A549 (cell line): ENCODE measurements at regions of chr5 and their contacts with region 1.

Region 1: GRCh38 chr5:88690409-88691229 is 192.4 kb downstream of the MEF2C start:
- DNase-seq: peak; percentile 49 to 59
- ATAC-seq: peak; percentile 69 to 90
- H3K4me3 ChIP-seq: peak overlapping the region; percentile 27
- H3K27ac ChIP-seq: no peak overlapping the region
- H3K4me1 ChIP-seq: peaks cover 3% of the 10 kb centered on the region; the same call in 1 of the 3 replicates
- CTCF ChIP-seq: peak; percentile 93
- EP300 ChIP-seq: no peak
- POLR2A ChIP-seq: no peak
- RAD21 ChIP-seq: peak; percentile 91 to 92

Region 2: DNA sequence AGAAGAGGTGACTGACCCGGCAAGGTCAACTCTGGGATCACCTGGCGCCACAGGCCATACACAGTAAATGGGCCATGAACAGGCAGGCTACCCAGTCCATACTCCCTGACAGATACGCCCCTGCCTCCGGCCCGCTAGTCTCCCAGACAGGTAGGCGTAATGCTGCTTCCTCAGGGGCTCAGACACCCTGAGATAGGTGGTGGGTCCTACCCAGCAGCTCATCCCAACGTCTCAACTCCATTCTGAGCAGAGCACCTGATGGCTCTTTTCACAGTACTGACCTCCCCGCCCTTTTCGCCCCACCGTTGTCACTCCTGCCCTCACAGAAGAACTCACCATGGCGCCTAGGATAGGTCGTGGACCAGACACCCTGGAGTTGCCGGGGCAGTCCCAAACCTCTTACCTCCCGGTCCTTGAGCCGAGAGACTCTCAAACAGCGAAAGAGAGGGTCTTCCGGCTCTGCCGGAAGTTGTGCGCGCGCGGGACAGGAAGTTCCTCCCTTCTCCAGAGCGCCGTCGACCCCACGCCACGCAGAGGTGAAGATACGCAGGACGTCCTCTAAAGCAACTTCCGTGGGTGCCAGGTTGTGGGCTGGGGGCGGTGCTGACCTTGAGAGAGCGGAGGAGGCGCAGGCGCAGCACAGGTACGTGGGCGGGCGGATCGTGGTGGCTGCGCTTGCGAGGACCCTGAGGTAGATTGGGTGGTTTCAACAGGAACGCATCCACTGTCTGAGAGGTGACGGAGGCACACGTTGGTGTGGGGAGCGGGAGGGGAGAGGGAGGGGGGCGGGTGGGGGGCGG is 422.0 kb before region 1 on chr5 and contains the start of gene TMEM161B:
- CTCF ChIA-PET with region 1: no interaction called
- POLR2A ChIA-PET with region 1: no interaction called
- DNase-seq: peak; percentile 71 to 92
- ATAC-seq: peak; percentile 99
- H3K4me3 ChIP-seq: peak within 1 kb of the TSS; percentile 87
- H3K27ac ChIP-seq: peak within 1 kb of the TSS; percentile 80 to 94
- H3K4me1 ChIP-seq: peaks cover 16% of the 10 kb centered on the region; the same call in 2 of the 3 replicates
- CTCF ChIP-seq: no peak
- EP300 ChIP-seq: no peak
- POLR2A ChIP-seq: peak; percentile 77
- RAD21 ChIP-seq: no peak
- polyA plus RNA-seq, gene TMEM161B: 22.7 and 30.4 TPM in 2 replicates

Region 3: GRCh38 chr5:88322785-88323184 is 367.8 kb before region 1 on chr5:
- CTCF ChIA-PET with region 1: no interaction called
- POLR2A ChIA-PET with region 1: no interaction called
- DNase-seq: no peak
- ATAC-seq: no peak
- H3K4me3 ChIP-seq: no peak overlapping the region
- H3K27ac ChIP-seq: no peak overlapping the region
- H3K4me1 ChIP-seq: no peaks in the 10 kb centered on the region
- CTCF ChIP-seq: no peak
- EP300 ChIP-seq: no peak
- POLR2A ChIP-seq: no peak
- RAD21 ChIP-seq: no peak

Region 4: GRCh38 chr5:88680253-88681132 is 10.1 kb before region 1 on chr5:
- CTCF ChIA-PET with region 1: interaction called, 49 read pairs
- POLR2A ChIA-PET with region 1: no interaction called
- DNase-seq: peak; percentile 56 to 81
- ATAC-seq: peak; percentile 86 to 95
- H3K4me3 ChIP-seq: peak overlapping the region; percentile 28
- H3K27ac ChIP-seq: peak overlapping the region in 1 of 2 experiments; percentile 73; a peak in 3 of 6 replicates
- H3K4me1 ChIP-seq: peaks cover 7% of the 10 kb centered on the region; the same call in 1 of the 3 replicates
- CTCF ChIP-seq: peak; percentile 90
- EP300 ChIP-seq: no peak
- POLR2A ChIP-seq: no peak
- RAD21 ChIP-seq: peak; percentile 78 to 94

Region 5: GRCh38 chr5:88702328-88702727 is 11.7 kb after region 1 on chr5:
- CTCF ChIA-PET with region 1: interaction called, 22 read pairs
- POLR2A ChIA-PET with region 1: no interaction called
- DNase-seq: no peak
- ATAC-seq: no peak; a peak in 1 of 6 replicates
- H3K4me3 ChIP-seq: no peak overlapping the region
- H3K27ac ChIP-seq: no peak overlapping the region
- H3K4me1 ChIP-seq: no peaks in the 10 kb centered on the region
- CTCF ChIP-seq: no peak
- EP300 ChIP-seq: no peak
- POLR2A ChIP-seq: no peak
- RAD21 ChIP-seq: no peak

Region 6: DNA sequence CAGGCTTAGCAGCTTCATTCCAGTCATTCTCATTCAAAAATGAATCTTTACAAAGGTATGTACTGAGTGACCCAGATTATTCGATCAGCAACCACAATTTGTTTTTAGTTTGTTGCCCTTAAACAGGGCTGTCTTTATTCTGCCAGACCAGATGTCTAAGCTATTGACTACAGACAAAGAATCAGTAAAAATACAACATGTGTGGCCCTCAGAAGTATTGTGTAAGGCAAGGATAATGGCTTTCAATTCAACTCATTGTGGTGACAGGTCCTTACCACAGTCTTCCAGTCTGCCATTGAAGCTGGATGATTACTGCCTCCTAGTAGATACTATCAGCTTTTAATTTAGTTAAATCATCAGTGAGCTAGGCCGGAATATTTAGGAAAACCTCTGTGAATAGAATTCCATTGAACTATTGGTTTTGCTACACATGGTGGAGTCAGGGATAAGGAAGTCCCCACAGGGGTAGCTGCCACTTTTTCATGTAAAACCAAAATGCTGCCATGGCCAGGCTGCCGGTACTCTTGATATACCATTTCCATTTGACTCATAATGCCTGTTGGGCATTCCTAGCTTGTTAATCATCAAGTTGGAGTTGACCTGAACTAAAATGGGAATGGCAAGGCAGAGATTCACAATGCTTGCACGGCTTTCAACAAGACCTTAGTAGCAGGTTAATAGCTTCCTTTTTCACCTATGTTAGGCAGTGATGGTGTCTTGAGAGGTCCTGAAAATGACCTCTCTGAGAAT is 16.8 kb after region 1 on chr5:
- CTCF ChIA-PET with region 1: interaction called, 22 read pairs
- POLR2A ChIA-PET with region 1: no interaction called
- DNase-seq: no peak
- ATAC-seq: no peak
- H3K4me3 ChIP-seq: no peak overlapping the region
- H3K27ac ChIP-seq: no peak overlapping the region
- H3K4me1 ChIP-seq: no peaks in the 10 kb centered on the region
- CTCF ChIP-seq: no peak
- EP300 ChIP-seq: no peak
- POLR2A ChIP-seq: no peak
- RAD21 ChIP-seq: no peak